Activated CD4-positive, alpha-beta T cell treated with anti-CD3 and anti-CD28 coated beads for 36 hours (primary cell): ENCODE measurements at regions of chr12 and their contacts with region 1.

Region 1: DNA sequence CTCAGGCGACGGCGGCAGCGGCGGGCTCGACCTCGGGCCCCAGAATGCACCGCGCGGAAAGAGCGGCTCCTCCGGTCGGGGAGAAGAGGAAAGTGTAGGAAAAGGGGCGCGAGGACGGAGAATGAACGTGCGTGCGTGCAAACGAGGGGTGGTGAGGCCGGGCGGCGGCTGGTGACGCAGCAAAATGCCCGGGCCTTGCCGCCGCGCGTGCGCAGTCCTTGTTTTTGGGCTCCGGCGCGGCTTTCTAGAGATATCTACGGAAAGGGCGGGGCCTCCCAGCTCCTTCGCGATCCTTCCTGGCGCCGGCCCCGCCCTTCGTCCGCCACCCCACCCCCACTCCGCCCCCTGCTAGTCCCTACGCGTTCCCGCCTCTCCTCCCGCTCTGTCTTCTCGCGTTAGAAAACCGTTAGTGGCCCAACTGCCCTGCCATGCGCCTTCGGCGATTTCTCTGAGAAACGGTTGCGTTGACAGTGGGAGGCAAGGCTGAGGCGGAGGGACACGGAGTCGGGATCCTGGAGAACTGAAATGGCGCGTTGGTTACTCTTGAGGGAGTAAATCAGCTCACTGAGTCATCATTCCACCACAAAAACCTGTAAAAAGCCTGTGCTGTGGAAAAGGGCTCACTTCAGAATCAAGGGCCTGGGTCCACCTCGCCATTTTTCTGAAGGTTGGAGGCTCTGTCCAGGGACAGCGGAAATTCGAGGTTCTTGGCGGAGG is at the start of gene PTGES3:
- DNase-seq: peak; percentile 99
- ATAC-seq: peak; percentile 85
- H3K4me3 Mint-ChIP-seq: peak within 1 kb of the TSS; percentile 99
- H3K27ac Mint-ChIP-seq: peak within 1 kb of the TSS; percentile 100
- H3K4me1 Mint-ChIP-seq: peaks cover 11% of the 10 kb centered on the region
- H3K27me3 Mint-ChIP-seq: no peaks in the 10 kb centered on the region
- total RNA-seq, gene PTGES3: 284 to 386 TPM

Region 2: DNA sequence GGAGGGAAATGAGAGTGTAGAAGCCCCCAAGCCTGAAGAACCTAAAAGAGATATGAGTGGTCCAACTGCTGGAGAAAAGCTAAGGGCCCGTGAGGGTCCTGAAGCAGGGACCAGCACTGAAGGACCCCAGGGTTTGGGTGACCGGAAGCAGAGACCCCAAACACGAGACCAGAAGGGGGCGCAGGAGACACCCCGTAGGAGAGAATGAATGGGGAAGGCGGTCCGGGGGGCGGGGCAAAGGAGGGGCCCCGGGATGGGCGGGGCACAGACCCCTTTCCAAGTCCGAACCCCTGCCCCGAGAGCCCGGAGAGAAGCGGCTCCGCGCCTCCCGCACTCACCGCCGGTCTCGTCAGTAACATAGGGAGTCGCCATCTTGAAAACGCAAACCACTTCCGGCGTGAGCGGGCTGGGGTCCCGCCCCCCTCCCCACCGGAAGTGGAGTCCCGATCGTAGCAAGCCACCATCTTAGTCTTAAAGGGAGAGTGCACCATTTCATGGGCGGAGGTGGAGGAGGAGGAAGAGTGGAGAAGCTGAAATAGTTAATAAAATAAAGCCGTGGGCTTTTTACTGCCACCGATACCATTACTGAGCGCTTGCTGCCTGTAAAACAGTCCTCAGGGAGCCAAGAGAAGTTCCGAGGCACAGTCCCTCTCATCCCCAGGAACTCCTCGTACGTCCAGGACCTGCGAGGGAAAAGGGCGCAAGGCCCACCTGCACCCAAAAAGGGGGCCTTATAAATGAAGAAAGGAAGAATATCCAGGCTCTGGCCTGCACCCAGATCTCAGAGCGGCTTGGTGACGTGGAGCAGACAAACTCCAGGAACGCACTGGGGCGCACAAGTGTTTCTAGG is 761.3 kb before region 1 on chr12:
- CTCF ChIA-PET with region 1: no interaction called
- POLR2A ChIA-PET with region 1: no interaction called
- intact Hi-C with region 1: loop called in 1 of 2 experiments (anchors 2 kb)
- DNase-seq: peak; percentile 97
- ATAC-seq: peak; percentile 40
- H3K4me3 Mint-ChIP-seq: peak overlapping the region; percentile 100
- H3K27ac Mint-ChIP-seq: peak overlapping the region; percentile 95
- H3K4me1 Mint-ChIP-seq: peaks cover 48% of the 10 kb centered on the region
- H3K27me3 Mint-ChIP-seq: no peaks in the 10 kb centered on the region

Region 3: GRCh38 chr12:56333679-56334489 is 354.4 kb before region 1 on chr12 and contains the start of gene PAN2:
- CTCF ChIA-PET with region 1: interaction called, 3 read pairs
- POLR2A ChIA-PET with region 1: no interaction called
- intact Hi-C with region 1: loop called in 1 of 2 experiments (anchors 1 kb)
- DNase-seq: peak; percentile 96
- ATAC-seq: peak; percentile 88
- H3K4me3 Mint-ChIP-seq: peak within 1 kb of the TSS; percentile 83
- H3K27ac Mint-ChIP-seq: peak within 1 kb of the TSS; percentile 99
- H3K4me1 Mint-ChIP-seq: peaks cover 37% of the 10 kb centered on the region
- H3K27me3 Mint-ChIP-seq: no peaks in the 10 kb centered on the region
- total RNA-seq, gene PAN2: 54.6 to 62.5 TPM

Region 4: GRCh38 chr12:56636675-56637540 is 51.4 kb before region 1 on chr12:
- CTCF ChIA-PET with region 1: interaction called, 15 read pairs
- POLR2A ChIA-PET with region 1: interaction called, 12 read pairs
- intact Hi-C with region 1: loop called (anchors 1 to 2 kb)
- DNase-seq: peak; percentile 98
- ATAC-seq: peak; percentile 73
- H3K4me3 Mint-ChIP-seq: peak overlapping the region; percentile 87
- H3K27ac Mint-ChIP-seq: peak overlapping the region; percentile 92
- H3K4me1 Mint-ChIP-seq: peaks cover 60% of the 10 kb centered on the region
- H3K27me3 Mint-ChIP-seq: no peaks in the 10 kb centered on the region

Region 5: DNA sequence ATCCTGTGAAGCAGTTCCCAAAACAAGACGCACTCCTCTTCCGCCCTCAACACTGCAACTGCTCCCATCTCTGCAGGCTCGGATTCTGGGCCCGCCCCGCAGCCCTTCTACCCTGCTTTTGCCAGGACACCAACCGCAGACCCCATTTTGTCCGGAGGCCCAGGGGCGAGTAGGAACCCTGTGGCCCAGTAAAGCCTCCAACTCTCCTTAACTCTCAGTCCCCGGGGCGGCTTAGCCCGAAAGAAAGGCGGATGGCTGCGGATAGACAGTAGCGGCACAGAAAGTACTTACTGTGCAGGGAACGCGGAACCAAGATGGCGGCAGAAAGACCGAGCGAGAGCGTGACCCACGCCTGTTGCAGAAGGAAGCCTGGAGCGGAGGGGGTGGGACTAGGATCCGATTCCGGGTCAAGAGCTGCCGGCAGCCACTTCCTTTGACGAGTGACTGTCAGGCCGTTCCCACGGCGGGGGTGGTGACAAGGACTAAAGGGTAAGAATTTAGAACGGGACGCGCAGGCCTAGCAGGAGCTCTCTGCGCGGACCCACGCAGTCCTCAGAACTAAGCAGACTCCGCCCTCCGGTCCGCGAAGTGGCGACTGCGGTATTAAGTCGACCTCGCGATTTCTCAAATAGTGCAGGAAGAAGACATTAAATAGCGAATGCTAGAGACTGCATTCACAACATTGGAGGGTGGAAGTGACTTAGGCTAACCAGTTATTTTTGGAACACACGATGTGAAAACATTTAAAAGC is 36.9 kb after region 1 on chr12 and contains the start of gene NACA:
- CTCF ChIA-PET with region 1: interaction called, 4 read pairs
- POLR2A ChIA-PET with region 1: interaction called, 37 read pairs
- intact Hi-C with region 1: loop called (anchors 1 kb)
- DNase-seq: peak; percentile 99
- ATAC-seq: peak; percentile 96
- H3K4me3 Mint-ChIP-seq: peak within 1 kb of the TSS; percentile 97
- H3K27ac Mint-ChIP-seq: peak within 1 kb of the TSS; percentile 99
- H3K4me1 Mint-ChIP-seq: peaks cover 44% of the 10 kb centered on the region
- H3K27me3 Mint-ChIP-seq: no peaks in the 10 kb centered on the region
- total RNA-seq, gene NACA: 1,215 to 1,231 TPM

Region 6: DNA sequence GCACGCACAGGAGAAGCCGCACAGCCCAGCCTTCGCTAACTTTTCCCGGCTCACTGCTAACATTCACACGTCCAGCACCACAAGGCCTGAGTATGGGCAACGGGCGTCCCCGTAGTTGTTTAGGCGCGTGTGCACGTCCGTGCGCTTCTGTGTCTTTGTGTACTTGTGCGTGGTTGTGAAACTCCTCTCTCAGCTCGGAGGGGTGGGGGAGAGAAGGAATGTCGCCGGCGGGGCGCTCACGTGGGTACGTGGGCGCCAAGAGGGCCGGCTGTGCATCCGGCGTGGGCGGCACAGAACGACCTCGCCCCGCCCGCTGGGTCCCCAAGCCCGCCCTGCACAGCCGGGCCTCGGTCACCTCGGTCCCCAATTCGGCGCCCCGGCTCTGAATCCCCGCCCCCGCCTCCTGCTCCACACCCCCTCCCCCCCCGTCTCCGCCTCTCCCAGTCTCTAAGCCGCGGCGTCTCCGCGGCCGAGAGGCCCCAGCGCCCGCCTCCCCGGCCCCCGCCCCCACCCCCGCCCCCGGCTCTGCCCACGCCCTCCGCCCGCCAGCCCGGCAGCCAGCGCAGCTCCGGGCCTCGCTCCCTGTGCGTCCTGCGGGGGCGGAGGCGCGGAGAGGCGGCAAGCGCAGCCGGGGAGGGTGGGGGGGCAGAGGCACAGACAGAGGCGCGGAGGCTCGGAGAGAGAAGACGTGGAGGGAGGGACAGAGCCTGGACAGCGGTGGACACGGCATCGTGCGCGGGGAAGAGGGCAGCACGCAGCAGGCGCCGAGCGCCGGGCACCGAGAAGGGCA is 400.4 kb after region 1 on chr12 and contains the start of gene NAB2:
- CTCF ChIA-PET with region 1: interaction called, 3 read pairs
- POLR2A ChIA-PET with region 1: interaction called, 11 read pairs
- intact Hi-C with region 1: loop called in 1 of 2 experiments (anchors 1 kb)
- DNase-seq: peak; percentile 95
- ATAC-seq: peak; percentile 49
- H3K4me3 Mint-ChIP-seq: peak within 1 kb of the TSS; percentile 93
- H3K27ac Mint-ChIP-seq: peak within 1 kb of the TSS; percentile 95
- H3K4me1 Mint-ChIP-seq: peaks cover 63% of the 10 kb centered on the region
- H3K27me3 Mint-ChIP-seq: no peaks in the 10 kb centered on the region
- total RNA-seq, gene NAB2: 46.8 to 48.6 TPM